ENCODE measurements at regions of chr4 and their contacts with region 1.

Region 1: GRCh38 chr4:102344954-102345794 is at the start of gene SLC39A8:
- DNase-seq: peak; percentile 89
- H3K4me3 Mint-ChIP-seq: peak within 1 kb of the TSS; percentile 76
- H3K27ac Mint-ChIP-seq: peak within 1 kb of the TSS; percentile 49
- H3K4me1 Mint-ChIP-seq: peaks cover 9% of the 10 kb centered on the region
- H3K27me3 Mint-ChIP-seq: no peaks in the 10 kb centered on the region
- CTCF ChIP-seq: peak; percentile 76
- total RNA-seq, gene SLC39A8: 35.1 and 43.3 TPM in 2 replicates

Region 2: DNA sequence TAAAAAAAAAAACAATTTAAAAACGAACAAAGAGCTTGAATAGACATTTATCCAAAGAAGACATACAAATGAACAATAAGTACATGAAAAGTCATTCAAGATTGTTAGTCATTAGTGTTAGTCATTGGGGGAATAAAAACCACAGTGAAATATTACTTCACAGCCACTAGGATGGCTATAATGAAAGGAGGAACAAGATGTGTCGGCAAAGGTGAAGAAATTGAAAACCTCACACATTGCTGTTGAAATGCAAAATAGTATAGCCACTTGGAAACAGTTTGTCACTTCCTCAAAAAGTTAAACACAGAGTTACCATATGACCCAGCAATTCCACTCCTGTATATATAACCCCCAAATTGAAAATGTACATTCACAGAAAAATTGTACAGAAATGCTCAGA is 45.3 kb after region 1 on chr4:
- CTCF ChIA-PET with region 1: interaction called, 5 read pairs
- POLR2A ChIA-PET with region 1: interaction called, 3 read pairs
- intact Hi-C with region 1: loop called (anchors 2 kb)
- DNase-seq: peak; percentile 79
- H3K4me3 Mint-ChIP-seq: no peak overlapping the region
- H3K27ac Mint-ChIP-seq: peak overlapping the region; percentile 66
- H3K4me1 Mint-ChIP-seq: peaks cover 24% of the 10 kb centered on the region
- H3K27me3 Mint-ChIP-seq: no peaks in the 10 kb centered on the region
- CTCF ChIP-seq: peak; percentile 21

Region 3: GRCh38 chr4:102430461-102430910 is 85.3 kb after region 1 on chr4:
- CTCF ChIA-PET with region 1: interaction called, 17 read pairs
- POLR2A ChIA-PET with region 1: interaction called, 62 read pairs
- intact Hi-C with region 1: loop called (anchors 1 kb)
- DNase-seq: peak; percentile 35
- H3K4me3 Mint-ChIP-seq: peak overlapping the region; percentile 81
- H3K27ac Mint-ChIP-seq: peak overlapping the region; percentile 73
- H3K4me1 Mint-ChIP-seq: peaks cover 11% of the 10 kb centered on the region
- H3K27me3 Mint-ChIP-seq: no peaks in the 10 kb centered on the region
- CTCF ChIP-seq: no peak

Region 4: DNA sequence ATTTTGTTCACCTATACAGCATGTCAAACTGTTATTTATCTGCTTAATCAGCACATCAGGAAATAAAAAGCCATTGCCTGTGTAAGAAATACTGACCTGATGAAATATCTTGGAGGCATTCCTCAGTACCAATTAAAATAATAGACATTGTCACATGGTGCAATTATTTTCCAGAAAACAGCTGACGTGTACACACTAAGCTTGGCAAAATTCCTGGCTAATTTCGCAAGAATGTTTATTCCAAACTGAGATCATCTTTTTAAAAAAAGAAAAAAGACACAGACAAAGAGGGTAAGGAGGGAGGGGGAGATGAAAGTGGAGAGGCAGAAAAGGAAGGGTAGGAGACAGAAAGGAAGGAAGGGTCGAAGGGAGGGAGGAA is 94.1 kb after region 1 on chr4:
- CTCF ChIA-PET with region 1: interaction called, 5 read pairs
- POLR2A ChIA-PET with region 1: interaction called, 19 read pairs
- intact Hi-C with region 1: no loop called
- DNase-seq: peak; percentile 97
- H3K4me3 Mint-ChIP-seq: peak overlapping the region; percentile 58
- H3K27ac Mint-ChIP-seq: peak overlapping the region; percentile 99
- H3K4me1 Mint-ChIP-seq: peaks cover 21% of the 10 kb centered on the region
- H3K27me3 Mint-ChIP-seq: no peaks in the 10 kb centered on the region
- CTCF ChIP-seq: no peak

Region 5: DNA sequence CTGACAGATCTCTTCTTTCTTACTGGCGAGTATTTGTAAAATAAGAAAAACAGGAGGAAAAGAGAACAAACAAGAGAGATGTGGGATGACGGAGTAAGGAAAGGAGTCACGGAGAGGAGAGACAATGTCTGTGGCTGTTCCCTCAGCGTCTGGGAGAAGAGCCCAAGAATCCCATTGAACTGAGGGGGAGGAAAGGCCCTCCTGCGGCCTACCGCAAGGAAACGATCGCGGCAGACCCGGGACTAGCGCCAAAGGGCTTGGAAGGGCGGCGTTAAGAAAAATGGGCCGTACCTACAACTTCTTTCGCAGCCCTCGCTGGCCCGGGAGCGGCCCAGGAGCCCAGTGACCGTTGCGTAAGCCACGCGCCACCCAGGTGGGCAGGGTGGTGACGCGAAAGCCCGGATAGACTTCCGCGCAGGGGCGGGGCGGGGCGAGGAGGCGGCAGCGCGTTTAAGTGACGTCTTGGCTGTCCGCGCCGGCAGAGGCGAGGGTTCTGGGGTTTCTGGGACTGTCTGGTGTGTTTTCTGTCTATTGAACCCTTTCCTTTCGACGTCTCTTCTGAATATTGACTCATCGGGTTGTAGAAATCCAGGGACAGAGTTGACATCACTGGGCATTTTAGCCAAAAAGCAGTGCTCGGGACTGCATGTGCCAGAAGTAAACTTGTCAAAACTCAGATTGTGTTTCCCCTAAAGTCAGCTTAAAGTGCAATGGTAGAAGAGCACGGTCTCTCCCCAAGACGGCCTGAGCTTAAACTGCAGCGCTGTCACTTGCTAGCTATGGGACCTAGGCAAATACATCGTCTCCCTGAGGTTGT is 674.3 kb after region 1 on chr4 and contains the start of gene SLC9B1:
- CTCF ChIA-PET with region 1: no interaction called
- POLR2A ChIA-PET with region 1: no interaction called
- intact Hi-C with region 1: loop called (anchors 10 kb)
- DNase-seq: peak; percentile 98
- H3K4me3 Mint-ChIP-seq: peak within 1 kb of the TSS; percentile 72
- H3K27ac Mint-ChIP-seq: peak within 1 kb of the TSS; percentile 97
- H3K4me1 Mint-ChIP-seq: no peaks in the 10 kb centered on the region
- H3K27me3 Mint-ChIP-seq: no peaks in the 10 kb centered on the region
- CTCF ChIP-seq: no peak
- total RNA-seq, gene SLC9B1: 0.77 and 0.86 TPM in 2 replicates

Region 6: GRCh38 chr4:103099691-103100392 is 754.7 kb after region 1 on chr4 and contains the start of gene BDH2:
- CTCF ChIA-PET with region 1: no interaction called
- POLR2A ChIA-PET with region 1: no interaction called
- intact Hi-C with region 1: loop called (anchors 5 kb)
- DNase-seq: peak; percentile 96
- H3K4me3 Mint-ChIP-seq: peak within 1 kb of the TSS; percentile 88
- H3K27ac Mint-ChIP-seq: peak within 1 kb of the TSS; percentile 90
- H3K4me1 Mint-ChIP-seq: peaks cover 16% of the 10 kb centered on the region
- H3K27me3 Mint-ChIP-seq: no peaks in the 10 kb centered on the region
- CTCF ChIP-seq: peak; percentile 59
- total RNA-seq, gene BDH2: 14.3 and 17.6 TPM in 2 replicates